ENCODE measurements at regions of chrX and their contacts with region 1.

Region 1: DNA sequence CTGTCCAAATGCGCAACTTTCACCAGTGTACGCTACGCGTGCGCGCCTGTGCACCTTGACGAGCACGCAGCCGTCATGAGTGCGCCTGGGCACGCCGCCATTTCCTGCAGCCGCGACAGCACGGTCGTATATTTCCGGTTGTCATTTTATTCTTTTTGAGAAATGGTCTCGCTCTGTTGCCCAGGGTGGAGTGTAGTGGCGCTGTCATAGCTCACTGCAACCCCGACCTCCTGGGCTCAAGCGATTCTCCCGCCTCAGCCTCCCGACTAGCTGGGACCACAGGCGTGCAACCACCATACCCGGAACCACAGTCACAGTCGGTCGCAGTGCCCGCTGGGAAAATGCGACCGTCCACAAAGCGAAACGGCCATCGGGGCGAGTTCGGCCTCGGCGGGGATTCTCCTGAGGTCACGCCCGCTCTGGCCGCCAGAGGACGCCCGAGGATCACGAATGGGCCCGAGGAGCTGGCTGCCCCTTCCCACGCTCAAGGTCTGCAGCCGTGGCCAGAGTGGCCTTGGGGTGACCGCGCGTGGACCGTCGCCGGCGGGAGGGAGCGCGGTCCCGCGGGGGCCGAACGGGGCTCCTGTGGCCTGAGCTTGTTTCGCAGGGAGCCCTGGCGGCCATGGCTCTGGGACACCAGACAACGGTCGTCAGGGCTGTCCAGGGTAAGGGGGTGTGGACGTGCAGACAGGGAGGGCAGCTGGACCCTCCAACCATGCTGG is 23.7 kb upstream of the PNMA3 start:
- DNase-seq: peak; percentile 77 to 79 (median 78)
- ATAC-seq: peak; percentile 84
- H3K4me3 ChIP-seq: no peak overlapping the region
- H3K4me1 ChIP-seq: no peaks in the 10 kb centered on the region
- CTCF ChIP-seq: peak; percentile 56

Region 2: GRCh38 chrX:152926279-152926678 is 106.3 kb before region 1 on chrX:
- intact Hi-C with region 1: no loop called
- DNase-seq: peak in 1 of 3 donors; percentile 48
- ATAC-seq: peak; percentile 78
- H3K4me3 ChIP-seq: no peak overlapping the region
- H3K4me1 ChIP-seq: no peaks in the 10 kb centered on the region
- CTCF ChIP-seq: no peak

Region 3: GRCh38 chrX:153353416-153353815 is 320.9 kb after region 1 on chrX:
- intact Hi-C with region 1: no loop called
- DNase-seq: no peak
- ATAC-seq: no peak
- H3K4me3 ChIP-seq: no peak overlapping the region
- H3K4me1 ChIP-seq: no peaks in the 10 kb centered on the region
- CTCF ChIP-seq: no peak

Region 4: DNA sequence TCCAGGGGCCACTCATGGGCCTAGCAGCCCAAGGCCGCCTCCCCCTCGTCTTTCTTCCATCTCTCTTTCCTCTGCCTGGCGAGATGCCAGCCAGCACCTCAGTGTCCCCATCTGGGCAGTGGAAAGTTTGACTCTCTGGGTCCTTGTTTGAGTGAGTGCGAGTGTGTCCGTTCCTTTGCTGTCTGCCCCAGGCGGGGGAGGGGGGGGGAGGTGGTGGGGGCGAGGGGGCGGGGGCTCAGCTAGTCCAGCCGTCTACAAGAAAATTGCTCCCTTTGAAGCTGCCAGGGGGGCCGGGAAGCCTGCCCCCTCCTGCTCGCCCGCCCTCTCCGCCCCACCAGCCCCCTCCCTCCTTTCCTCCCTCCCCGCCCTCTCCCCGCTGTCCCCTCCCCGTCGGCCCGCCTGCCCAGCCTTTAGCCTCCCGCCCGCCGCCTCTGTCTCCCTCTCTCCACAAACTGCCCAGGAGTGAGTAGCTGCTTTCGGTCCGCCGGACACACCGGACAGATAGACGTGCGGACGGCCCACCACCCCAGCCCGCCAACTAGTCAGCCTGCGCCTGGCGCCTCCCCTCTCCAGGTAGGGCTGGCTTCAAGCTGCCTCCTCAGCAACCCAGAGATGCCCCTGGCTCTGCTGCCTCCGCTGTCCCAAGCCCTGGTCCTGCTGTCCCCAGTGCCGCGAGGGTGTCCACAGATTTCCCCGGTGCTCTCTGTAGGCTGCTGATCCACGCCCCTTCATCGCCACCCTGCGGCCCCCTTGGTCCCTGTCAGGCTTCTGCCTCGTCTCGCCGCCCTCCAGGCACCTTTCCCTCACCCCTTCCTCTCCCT is 462.2 kb after region 1 on chrX and contains the start of gene BGN:
- intact Hi-C with region 1: loop called in 1 of 2 experiments (anchors 10 kb)
- DNase-seq: peak in 1 of 3 donors; percentile 31
- ATAC-seq: peak; percentile 7
- H3K4me3 ChIP-seq: no peak within 1 kb of the TSS
- H3K4me1 ChIP-seq: no peaks in the 10 kb centered on the region
- CTCF ChIP-seq: no peak
- total RNA-seq, gene BGN: 3.5 to 21.8 (median 10.1) TPM

Measured in mucosa of descending colon (tissue), 3 donors.